ENCODE measurements at regions of chr10 and their contacts with region 1.

Region 1: GRCh38 chr10:11986593-11987216 is 55.9 kb downstream of the UPF2 start:
- DNase-seq: peak; percentile 82
- ATAC-seq: peak; percentile 58
- H3K4me3 Mint-ChIP-seq: no peak overlapping the region
- H3K27ac Mint-ChIP-seq: no peak overlapping the region
- H3K4me1 Mint-ChIP-seq: peaks cover 4% of the 10 kb centered on the region
- H3K27me3 Mint-ChIP-seq: no peaks in the 10 kb centered on the region

Region 2: DNA sequence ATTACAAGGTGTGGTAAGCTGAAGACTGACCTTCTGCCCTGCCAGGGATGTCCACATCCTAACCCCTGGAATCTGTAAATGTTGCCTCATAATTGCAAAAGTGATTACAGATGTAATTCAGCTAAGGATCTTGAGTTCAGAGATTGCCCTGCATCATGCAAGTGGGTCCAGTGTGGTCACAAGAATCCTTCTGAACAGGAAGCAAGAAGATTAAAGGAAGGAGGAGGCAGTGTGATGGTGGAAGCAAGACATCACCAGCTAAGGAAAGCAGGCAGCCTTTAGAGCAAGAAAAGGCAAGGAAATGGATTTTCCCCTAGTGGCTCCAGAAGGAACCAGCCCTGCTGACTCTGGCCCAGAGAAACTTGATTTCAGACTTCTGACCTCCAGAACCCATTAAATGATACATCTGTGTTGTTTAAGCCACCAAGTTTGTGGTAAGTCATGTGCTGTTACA is 453.4 kb before region 1 on chr10:
- CTCF ChIA-PET with region 1: no interaction called
- POLR2A ChIA-PET with region 1: no interaction called
- DNase-seq: no peak
- ATAC-seq: no peak
- H3K4me3 Mint-ChIP-seq: no peak overlapping the region
- H3K27ac Mint-ChIP-seq: no peak overlapping the region
- H3K4me1 Mint-ChIP-seq: peaks cover 18% of the 10 kb centered on the region
- H3K27me3 Mint-ChIP-seq: peaks cover 3% of the 10 kb centered on the region

Region 3: DNA sequence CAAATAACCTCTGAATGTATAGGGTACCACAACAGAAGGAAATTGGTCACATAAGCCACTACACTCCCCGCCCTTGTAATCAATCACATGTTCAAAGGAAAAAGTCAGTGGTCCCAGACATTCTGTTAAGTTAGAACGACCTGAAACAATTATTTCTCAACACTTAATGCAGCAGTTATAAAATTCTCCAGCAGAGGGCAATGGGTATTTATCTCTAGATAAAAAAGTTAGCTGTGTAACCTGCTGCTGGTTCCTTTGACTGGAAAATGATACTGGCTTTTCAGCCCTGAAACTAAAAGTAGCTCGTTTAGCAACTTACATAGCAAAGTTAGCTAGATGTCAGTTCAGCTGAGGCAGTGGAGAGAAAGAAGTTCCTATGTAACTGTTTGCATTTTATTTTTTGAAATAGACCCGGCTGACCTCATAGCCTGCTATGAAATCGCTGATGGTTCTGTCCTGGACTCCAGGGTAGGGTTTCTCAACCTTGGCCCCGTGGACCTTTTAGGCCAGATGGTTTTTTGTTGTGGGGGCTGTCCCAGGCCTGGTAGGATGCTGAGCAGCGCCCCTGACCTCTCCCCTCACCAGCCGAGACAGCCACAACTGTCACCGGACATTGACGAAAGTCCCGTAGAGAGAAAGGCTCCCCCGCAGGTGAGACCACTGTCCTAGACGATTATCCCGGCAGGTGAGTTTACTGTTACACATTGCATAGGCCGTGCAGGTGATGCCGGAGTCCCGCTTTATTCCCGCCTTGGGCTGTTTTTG is 203.7 kb before region 1 on chr10:
- CTCF ChIA-PET with region 1: interaction called, 53 read pairs
- POLR2A ChIA-PET with region 1: no interaction called
- DNase-seq: peak; percentile 30
- ATAC-seq: peak; percentile 47
- H3K4me3 Mint-ChIP-seq: no peak overlapping the region
- H3K27ac Mint-ChIP-seq: no peak overlapping the region
- H3K4me1 Mint-ChIP-seq: no peaks in the 10 kb centered on the region
- H3K27me3 Mint-ChIP-seq: peaks cover 3% of the 10 kb centered on the region

Region 4: DNA sequence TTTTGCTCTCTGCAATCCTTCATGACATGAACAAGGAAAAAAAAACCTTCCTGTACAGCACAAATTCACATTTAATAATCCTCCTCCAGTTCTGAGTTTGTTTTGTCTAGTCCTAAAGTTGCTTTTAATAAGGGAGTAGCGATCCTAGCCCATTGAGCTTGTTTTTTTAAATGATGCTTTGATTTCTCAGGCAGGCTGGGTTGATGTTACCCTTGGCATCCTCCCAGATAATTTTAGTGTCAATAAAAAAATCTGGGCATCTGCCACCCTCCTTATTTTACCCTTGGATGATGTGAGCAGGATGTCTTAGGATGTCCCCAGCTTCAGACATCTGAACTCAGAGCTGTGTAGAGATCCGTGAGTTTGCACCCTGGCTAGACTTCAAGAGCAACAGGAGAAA is 197.4 kb before region 1 on chr10:
- CTCF ChIA-PET with region 1: interaction called, 53 read pairs
- POLR2A ChIA-PET with region 1: no interaction called
- DNase-seq: no peak
- ATAC-seq: no peak
- H3K4me3 Mint-ChIP-seq: no peak overlapping the region
- H3K27ac Mint-ChIP-seq: no peak overlapping the region
- H3K4me1 Mint-ChIP-seq: no peaks in the 10 kb centered on the region
- H3K27me3 Mint-ChIP-seq: peaks cover 6% of the 10 kb centered on the region

Region 5: DNA sequence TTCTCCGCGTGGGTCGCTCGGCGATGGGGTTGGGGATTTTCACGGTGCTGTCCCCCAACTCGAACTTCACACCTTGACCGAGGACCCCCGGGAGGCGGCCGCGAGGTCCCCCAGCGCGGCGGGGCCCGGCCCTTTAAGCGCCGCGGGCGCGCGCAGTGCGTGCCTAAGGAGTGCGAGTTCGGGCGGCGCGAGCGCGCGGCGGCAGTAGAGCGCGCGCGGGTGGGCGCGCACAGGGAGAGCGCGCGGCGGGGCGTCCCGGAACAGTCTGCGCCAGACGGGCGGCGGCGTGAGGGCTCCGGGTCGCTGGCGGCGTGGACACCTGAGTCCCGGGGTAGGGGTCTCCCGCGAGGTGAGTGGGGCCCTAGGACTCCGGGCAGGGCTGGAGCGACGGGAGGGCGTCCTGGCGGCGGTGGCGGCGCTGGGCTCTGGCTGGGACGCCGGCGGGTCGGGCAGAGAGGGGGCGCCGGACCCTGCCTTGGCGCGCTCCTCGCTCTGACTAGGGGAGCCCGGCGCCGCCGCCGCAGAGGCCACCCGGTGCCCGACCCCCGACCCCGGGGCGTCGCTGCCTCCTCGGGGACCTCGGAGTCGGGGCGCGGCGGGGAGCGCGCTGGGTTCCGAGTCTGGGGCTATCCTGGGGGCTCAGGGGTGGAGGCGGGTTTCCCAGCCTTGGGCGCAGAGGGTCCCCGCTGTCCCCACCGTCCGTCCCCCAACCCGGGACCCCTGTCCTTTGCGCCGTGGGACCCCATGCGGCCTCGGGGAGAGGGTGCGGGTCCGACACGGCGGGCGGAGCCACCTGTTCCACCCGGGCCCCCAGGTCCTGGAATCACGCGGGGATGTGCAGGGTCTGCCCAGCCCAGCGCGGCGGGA is 163.3 kb before region 1 on chr10 and contains the start of gene PROSER2:
- CTCF ChIA-PET with region 1: interaction called, 15 read pairs
- POLR2A ChIA-PET with region 1: interaction called, 3 read pairs
- DNase-seq: peak; percentile 46
- ATAC-seq: peak; percentile 83
- H3K4me3 Mint-ChIP-seq: peak within 1 kb of the TSS; percentile 70
- H3K27ac Mint-ChIP-seq: no peak within 1 kb of the TSS
- H3K4me1 Mint-ChIP-seq: peaks cover 9% of the 10 kb centered on the region
- H3K27me3 Mint-ChIP-seq: peaks cover 49% of the 10 kb centered on the region
- total RNA-seq, gene PROSER2: 0.29 to 0.74 TPM

Region 6: DNA sequence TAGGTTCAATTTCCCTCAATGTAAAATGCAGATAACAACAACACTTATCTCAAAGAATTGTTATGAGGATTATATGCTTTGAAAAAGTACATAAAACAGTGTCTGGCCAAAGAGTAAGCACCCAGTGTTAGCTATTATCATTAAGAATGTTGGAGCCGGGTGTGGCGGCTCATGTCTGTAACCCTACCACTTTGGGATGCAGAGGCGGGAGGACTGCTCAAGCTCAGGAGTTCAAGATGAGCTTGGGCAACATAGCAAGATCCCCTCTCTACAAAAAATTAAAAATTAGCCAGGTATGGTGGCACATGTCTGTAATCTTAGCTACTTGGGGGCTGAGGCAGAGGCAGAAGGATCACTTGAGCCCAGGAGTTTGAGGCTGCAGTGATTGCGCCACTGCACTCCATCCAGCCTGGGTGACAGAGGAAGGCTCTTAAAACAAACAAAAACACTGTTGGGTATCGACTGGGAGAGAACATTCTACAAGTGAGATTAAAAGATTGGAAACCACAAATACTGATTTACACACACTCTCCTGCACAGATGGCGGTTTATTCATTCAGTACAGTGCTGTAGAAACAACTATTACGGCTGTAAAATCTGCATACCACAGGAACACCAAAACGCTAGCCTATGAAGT is 56.2 kb before region 1 on chr10:
- CTCF ChIA-PET with region 1: interaction called, 10 read pairs
- POLR2A ChIA-PET with region 1: no interaction called
- DNase-seq: no peak
- ATAC-seq: no peak
- H3K4me3 Mint-ChIP-seq: no peak overlapping the region
- H3K27ac Mint-ChIP-seq: no peak overlapping the region
- H3K4me1 Mint-ChIP-seq: no peaks in the 10 kb centered on the region
- H3K27me3 Mint-ChIP-seq: no peaks in the 10 kb centered on the region

Region 7: DNA sequence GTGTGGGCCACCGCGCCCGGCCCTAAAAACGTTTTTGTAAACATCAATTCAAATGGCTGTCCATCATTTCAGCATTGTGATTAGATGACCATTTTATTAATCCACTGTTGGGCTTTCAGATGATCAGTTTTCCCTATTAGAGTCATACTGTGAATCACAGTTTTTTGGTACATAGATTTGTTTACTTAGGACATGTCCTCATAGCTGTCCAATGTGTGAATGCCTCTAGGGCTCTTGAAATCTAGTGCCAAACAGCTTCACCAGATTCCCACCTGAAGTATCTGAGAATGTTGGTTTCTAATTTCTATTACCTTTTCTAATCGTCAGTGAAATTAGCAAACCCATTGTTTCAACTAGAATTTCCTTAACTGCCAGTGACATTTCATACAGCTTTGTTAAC is 10.9 kb before region 1 on chr10:
- CTCF ChIA-PET with region 1: interaction called, 10 read pairs
- POLR2A ChIA-PET with region 1: no interaction called
- DNase-seq: no peak
- ATAC-seq: no peak
- H3K4me3 Mint-ChIP-seq: no peak overlapping the region
- H3K27ac Mint-ChIP-seq: no peak overlapping the region
- H3K4me1 Mint-ChIP-seq: peaks cover 12% of the 10 kb centered on the region
- H3K27me3 Mint-ChIP-seq: no peaks in the 10 kb centered on the region

Region 8: DNA sequence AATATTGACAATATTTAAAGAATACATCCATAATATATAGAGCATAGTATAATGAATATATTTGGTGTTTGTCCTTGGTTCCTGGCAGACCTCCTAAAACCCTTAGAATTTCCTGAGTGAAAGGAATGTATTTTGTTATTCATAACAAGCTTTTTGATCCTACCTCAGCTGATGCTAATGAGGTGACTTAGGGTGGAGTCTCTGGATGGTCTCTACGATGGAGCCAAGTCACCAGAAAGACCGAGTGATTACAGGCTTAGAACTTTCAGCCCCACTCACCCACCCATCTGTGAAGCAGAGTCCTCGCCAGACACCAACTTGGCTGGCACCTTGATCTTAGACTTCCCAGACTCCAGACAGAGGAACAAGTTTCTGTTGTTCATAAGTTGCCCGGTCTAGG is 20.0 kb after region 1 on chr10:
- CTCF ChIA-PET with region 1: interaction called, 14 read pairs
- POLR2A ChIA-PET with region 1: no interaction called
- DNase-seq: no peak
- ATAC-seq: no peak
- H3K4me3 Mint-ChIP-seq: no peak overlapping the region
- H3K27ac Mint-ChIP-seq: no peak overlapping the region
- H3K4me1 Mint-ChIP-seq: no peaks in the 10 kb centered on the region
- H3K27me3 Mint-ChIP-seq: no peaks in the 10 kb centered on the region

Measured in activated CD8-positive, alpha-beta T cell treated with anti-CD3 and anti-CD28 coated beads, Interleukin-2, amount 10 ng/mL, durations not matched to agents 7 days and 5 days (primary cell).